OCI-LY7 (cell line): ENCODE measurements at regions of chr4 and their contacts with region 1.

Region 1: GRCh38 chr4:86653237-86653865 is 59.2 kb downstream of the PTPN13 start:
- DNase-seq: peak; percentile 39
- H3K4me3 ChIP-seq: no peak overlapping the region
- H3K27ac ChIP-seq: no peak overlapping the region
- H3K4me1 ChIP-seq: no peaks in the 10 kb centered on the region
- CTCF ChIP-seq: peak; percentile 95

Region 2: GRCh38 chr4:86608757-86609375 is 44.5 kb before region 1 on chr4:
- CTCF ChIA-PET with region 1: no interaction called
- POLR2A ChIA-PET with region 1: no interaction called
- intact Hi-C with region 1: no loop called
- DNase-seq: no peak
- H3K4me3 ChIP-seq: no peak overlapping the region
- H3K27ac ChIP-seq: no peak overlapping the region
- H3K4me1 ChIP-seq: no peaks in the 10 kb centered on the region
- CTCF ChIP-seq: no peak

Region 3: GRCh38 chr4:86895692-86896488 is 242.5 kb after region 1 on chr4:
- CTCF ChIA-PET with region 1: no interaction called
- POLR2A ChIA-PET with region 1: no interaction called
- intact Hi-C with region 1: loop called (anchors 1 kb)
- DNase-seq: peak; percentile 73
- H3K4me3 ChIP-seq: no peak overlapping the region
- H3K27ac ChIP-seq: no peak overlapping the region
- H3K4me1 ChIP-seq: no peaks in the 10 kb centered on the region
- CTCF ChIP-seq: peak; percentile 96

Region 4: GRCh38 chr4:88230969-88231771 is 1577.8 kb after region 1 on chr4:
- CTCF ChIA-PET with region 1: no interaction called
- POLR2A ChIA-PET with region 1: no interaction called
- intact Hi-C with region 1: loop called (anchors 5 kb)
- DNase-seq: no peak
- H3K4me3 ChIP-seq: no peak overlapping the region
- H3K27ac ChIP-seq: no peak overlapping the region
- H3K4me1 ChIP-seq: no peaks in the 10 kb centered on the region
- CTCF ChIP-seq: no peak